ENCODE measurements at regions of chr15 and their contacts with region 1.

Region 1: GRCh38 chr15:78308422-78309032 is 9.1 kb upstream of the SKIC8 start:
- DNase-seq: peak in 1 of 2 experiments; percentile 68
- H3K4me3 ChIP-seq: no peak overlapping the region
- H3K27ac ChIP-seq: no peak overlapping the region
- H3K4me1 ChIP-seq: peaks cover 26% of the 10 kb centered on the region
- H3K27me3 ChIP-seq: no peaks in the 10 kb centered on the region
- CTCF ChIP-seq: peak; percentile 86

Region 2: GRCh38 chr15:78034495-78035191 is 273.9 kb before region 1 on chr15:
- CTCF ChIA-PET with region 1: no interaction called
- POLR2A ChIA-PET with region 1: no interaction called
- intact Hi-C with region 1: no loop called
- DNase-seq: no peak
- H3K4me3 ChIP-seq: no peak overlapping the region
- H3K27ac ChIP-seq: no peak overlapping the region
- H3K4me1 ChIP-seq: no peaks in the 10 kb centered on the region
- H3K27me3 ChIP-seq: no peaks in the 10 kb centered on the region
- CTCF ChIP-seq: no peak

Region 3: GRCh38 chr15:78204351-78205309 is 103.9 kb before region 1 on chr15:
- CTCF ChIA-PET with region 1: no interaction called
- POLR2A ChIA-PET with region 1: no interaction called
- intact Hi-C with region 1: no loop called
- DNase-seq: no peak
- H3K4me3 ChIP-seq: no peak overlapping the region
- H3K27ac ChIP-seq: no peak overlapping the region
- H3K4me1 ChIP-seq: peaks cover 36% of the 10 kb centered on the region
- H3K27me3 ChIP-seq: peaks cover 3% of the 10 kb centered on the region; the same call in 1 of the 2 replicates
- CTCF ChIP-seq: no peak

Region 4: GRCh38 chr15:78284758-78285157 is 23.8 kb before region 1 on chr15:
- CTCF ChIA-PET with region 1: no interaction called
- POLR2A ChIA-PET with region 1: no interaction called
- intact Hi-C with region 1: no loop called
- DNase-seq: no peak
- H3K4me3 ChIP-seq: no peak overlapping the region
- H3K27ac ChIP-seq: no peak overlapping the region
- H3K4me1 ChIP-seq: no peaks in the 10 kb centered on the region
- H3K27me3 ChIP-seq: no peaks in the 10 kb centered on the region
- CTCF ChIP-seq: no peak

Region 5: DNA sequence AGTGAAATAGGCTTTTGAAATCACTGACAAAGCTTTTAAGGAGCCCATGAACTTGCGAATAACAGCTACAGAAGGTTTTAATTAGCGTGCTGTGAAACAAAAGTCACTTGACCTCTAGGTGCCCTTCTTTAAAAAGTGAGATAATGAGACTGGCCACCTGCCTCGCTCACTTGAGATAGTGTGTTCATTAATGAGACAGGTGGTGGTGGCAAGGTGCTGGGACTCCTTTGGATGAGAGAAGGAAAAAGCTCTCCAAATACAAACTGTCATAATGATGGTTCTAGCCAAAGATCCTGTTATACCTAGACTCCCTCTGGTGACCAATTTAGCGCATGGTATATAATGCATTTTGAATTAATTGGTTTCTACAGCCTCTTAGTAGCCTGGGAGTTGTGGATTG is 106.8 kb after region 1 on chr15:
- CTCF ChIA-PET with region 1: no interaction called
- POLR2A ChIA-PET with region 1: no interaction called
- intact Hi-C with region 1: loop called (anchors 1 kb)
- DNase-seq: no peak
- H3K4me3 ChIP-seq: no peak overlapping the region
- H3K27ac ChIP-seq: no peak overlapping the region
- H3K4me1 ChIP-seq: peaks cover 6% of the 10 kb centered on the region
- H3K27me3 ChIP-seq: no peaks in the 10 kb centered on the region
- CTCF ChIP-seq: peak; percentile 65

Region 6: GRCh38 chr15:78422571-78423340 is 114.2 kb after region 1 on chr15:
- CTCF ChIA-PET with region 1: interaction called, 3 read pairs
- POLR2A ChIA-PET with region 1: no interaction called
- intact Hi-C with region 1: loop called (anchors 2 kb)
- DNase-seq: peak; percentile 41 to 43
- H3K4me3 ChIP-seq: no peak overlapping the region
- H3K27ac ChIP-seq: no peak overlapping the region
- H3K4me1 ChIP-seq: no peaks in the 10 kb centered on the region
- H3K27me3 ChIP-seq: no peaks in the 10 kb centered on the region
- CTCF ChIP-seq: peak; percentile 90

Region 7: GRCh38 chr15:78481917-78482316 is 173.4 kb after region 1 on chr15:
- CTCF ChIA-PET with region 1: interaction called, 6 read pairs
- POLR2A ChIA-PET with region 1: no interaction called
- intact Hi-C with region 1: loop called (anchors 1 kb)
- DNase-seq: no peak
- H3K4me3 ChIP-seq: no peak overlapping the region
- H3K27ac ChIP-seq: no peak overlapping the region
- H3K4me1 ChIP-seq: no peaks in the 10 kb centered on the region
- H3K27me3 ChIP-seq: no peaks in the 10 kb centered on the region
- CTCF ChIP-seq: no peak

Region 8: DNA sequence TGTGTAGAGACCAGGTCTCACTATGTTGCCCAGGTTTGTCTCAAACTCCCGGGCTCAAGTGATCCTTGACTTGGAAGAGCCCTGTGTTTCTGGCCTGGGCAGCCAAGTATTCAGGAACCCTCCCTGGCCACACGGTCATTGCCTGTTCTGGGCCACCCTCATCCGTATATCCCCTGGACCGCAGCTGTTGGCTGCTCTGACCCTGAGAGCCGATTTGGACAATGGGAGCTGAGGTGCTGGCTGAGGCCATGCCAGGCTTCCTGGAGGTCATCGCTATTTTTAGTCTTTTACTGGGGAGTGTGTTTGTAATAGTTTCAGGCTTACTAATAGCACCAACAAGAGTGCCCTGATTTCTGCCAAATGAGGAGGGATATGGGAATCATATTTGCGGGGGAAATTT is 442.0 kb after region 1 on chr15:
- CTCF ChIA-PET with region 1: no interaction called
- POLR2A ChIA-PET with region 1: interaction called, 4 read pairs
- intact Hi-C with region 1: loop called (anchors 5 kb)
- DNase-seq: no peak
- H3K4me3 ChIP-seq: peak overlapping the region; percentile 35; the same call in 1 of the 2 replicates
- H3K27ac ChIP-seq: no peak overlapping the region
- H3K4me1 ChIP-seq: no peaks in the 10 kb centered on the region; the same call in 1 of the 2 replicates
- H3K27me3 ChIP-seq: no peaks in the 10 kb centered on the region
- CTCF ChIP-seq: no peak

Measured in PC-9 (cell line).